PC-9 (cell line): ENCODE measurements at regions of chr7 and their contacts with region 1.

Region 1: DNA sequence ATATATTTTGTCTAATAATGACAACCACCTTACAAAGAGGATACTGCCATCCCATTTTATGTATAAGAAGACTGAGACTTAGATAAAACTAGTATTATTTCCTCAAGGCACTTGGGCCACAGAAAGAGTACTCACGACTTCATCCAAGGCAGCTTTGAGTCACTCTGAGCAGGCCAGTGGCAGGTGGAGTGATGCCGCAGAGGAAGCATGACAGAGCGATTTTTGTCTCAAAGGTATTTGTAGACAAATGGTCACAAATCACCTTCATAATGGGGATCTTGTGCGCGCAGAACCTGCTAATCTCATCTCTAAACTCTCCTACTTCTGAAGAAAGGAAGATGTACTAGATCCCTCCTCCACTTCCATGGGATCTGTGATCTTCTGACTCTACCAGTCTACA is 113.2 kb upstream of the NAMPT start:
- DNase-seq: no peak
- H3K4me3 ChIP-seq: no peak overlapping the region
- H3K27ac ChIP-seq: no peak overlapping the region
- H3K4me1 ChIP-seq: no peaks in the 10 kb centered on the region
- H3K27me3 ChIP-seq: no peaks in the 10 kb centered on the region
- CTCF ChIP-seq: no peak

Region 2: DNA sequence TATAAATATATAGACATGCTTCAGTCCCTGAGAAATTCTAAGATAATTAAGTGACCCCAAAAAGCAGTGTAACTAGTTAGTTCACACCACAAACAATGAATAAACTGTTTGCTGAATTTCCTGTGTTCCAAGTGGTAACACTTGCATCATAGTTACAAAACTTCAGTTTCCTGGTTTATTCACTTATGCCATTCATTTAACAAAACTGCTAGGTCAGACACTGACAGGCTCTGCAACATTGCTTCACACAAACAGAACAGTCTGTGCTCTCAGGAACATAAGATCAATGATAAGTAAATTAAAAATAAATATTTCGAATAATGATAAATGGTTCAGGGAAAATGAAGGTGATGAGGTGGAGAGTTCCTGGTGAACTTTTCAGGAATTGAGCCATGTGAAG is 20.1 kb after region 1 on chr7:
- CTCF ChIA-PET with region 1: no interaction called
- POLR2A ChIA-PET with region 1: no interaction called
- intact Hi-C with region 1: loop called (anchors 2 kb)
- DNase-seq: peak; percentile 17 to 92
- H3K4me3 ChIP-seq: peak overlapping the region; percentile 24; the same call in 1 of the 2 replicates
- H3K27ac ChIP-seq: peak overlapping the region; percentile 98
- H3K4me1 ChIP-seq: peaks cover 48% of the 10 kb centered on the region
- H3K27me3 ChIP-seq: no peaks in the 10 kb centered on the region
- CTCF ChIP-seq: no peak